ENCODE measurements at regions of chr20 and their contacts with region 1.

Region 1: DNA sequence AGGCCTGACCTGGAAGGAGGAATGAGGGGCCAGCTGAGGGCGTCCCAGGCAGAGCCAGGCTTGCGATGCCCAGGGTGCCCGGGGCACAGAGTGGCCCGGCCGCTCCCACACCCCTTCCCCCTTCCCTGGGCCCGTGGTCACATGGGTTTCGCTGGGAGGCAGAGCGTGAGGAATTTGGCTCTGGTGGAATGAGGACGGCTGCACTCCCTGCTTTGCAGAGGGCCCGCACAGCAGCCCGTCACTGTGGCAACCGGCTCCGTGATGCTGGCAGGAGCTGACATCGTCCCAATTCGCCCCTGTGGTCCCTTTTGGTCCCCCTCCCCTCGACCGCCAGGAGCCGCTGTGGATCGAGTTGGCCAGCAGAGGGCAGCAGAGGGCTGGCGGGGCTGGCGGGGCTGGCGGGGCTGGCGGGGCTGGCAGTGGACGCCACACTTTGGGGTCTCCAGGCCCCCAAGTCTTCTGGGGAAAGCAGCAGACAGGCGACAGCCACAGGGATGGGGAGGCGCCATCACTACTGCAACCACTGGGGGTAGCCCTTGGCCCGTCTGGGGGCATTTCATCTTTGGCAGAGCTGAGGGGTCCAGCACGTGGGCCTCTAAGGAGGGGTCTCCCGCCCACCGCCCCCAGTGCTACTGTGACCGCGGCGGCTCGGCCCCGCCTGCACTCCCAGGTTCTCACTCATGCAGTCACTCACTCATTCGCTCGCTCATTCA is 49.6 kb upstream of the BHLHE23 start:
- DNase-seq: peak; percentile 32 to 79 (median 75)
- ATAC-seq: peak; percentile 87
- H3K4me3 ChIP-seq: no peak overlapping the region
- H3K27ac ChIP-seq: no peak overlapping the region
- H3K4me1 ChIP-seq: peaks cover 0 to 35% of the 10 kb centered on the region in 2 experiments; a peak in 3 of 5 replicates
- H3K27me3 ChIP-seq: peaks cover 5 to 67% of the 10 kb centered on the region in 2 experiments
- CTCF ChIP-seq: peak; percentile 65 to 93 (median 79)
- EP300 ChIP-seq: no peak
- POLR2A ChIP-seq: no peak
- RAD21 ChIP-seq: peak; percentile 39 to 58

Region 2: GRCh38 chr20:62952373-62952967 is 103.9 kb before region 1 on chr20 and contains the start of gene SLC17A9:
- CTCF ChIA-PET with region 1: no interaction called
- POLR2A ChIA-PET with region 1: no interaction called
- in situ Hi-C with region 1: no loop called
- intact Hi-C with region 1: no loop called
- DNase-seq: peak in 1 of 4 experiments; percentile 32
- ATAC-seq: no peak
- H3K4me3 ChIP-seq: no peak within 1 kb of the TSS
- H3K27ac ChIP-seq: no peak within 1 kb of the TSS
- H3K4me1 ChIP-seq: peaks cover 3 to 35% of the 10 kb centered on the region in 2 experiments; a peak in 3 of 5 replicates
- H3K27me3 ChIP-seq: peaks cover 11 to 25% of the 10 kb centered on the region in 2 experiments; a peak in 4 of 5 replicates
- CTCF ChIP-seq: no peak
- EP300 ChIP-seq: no peak
- POLR2A ChIP-seq: no peak
- RAD21 ChIP-seq: no peak
- polyA plus RNA-seq, gene SLC17A9: not detected

Region 3: DNA sequence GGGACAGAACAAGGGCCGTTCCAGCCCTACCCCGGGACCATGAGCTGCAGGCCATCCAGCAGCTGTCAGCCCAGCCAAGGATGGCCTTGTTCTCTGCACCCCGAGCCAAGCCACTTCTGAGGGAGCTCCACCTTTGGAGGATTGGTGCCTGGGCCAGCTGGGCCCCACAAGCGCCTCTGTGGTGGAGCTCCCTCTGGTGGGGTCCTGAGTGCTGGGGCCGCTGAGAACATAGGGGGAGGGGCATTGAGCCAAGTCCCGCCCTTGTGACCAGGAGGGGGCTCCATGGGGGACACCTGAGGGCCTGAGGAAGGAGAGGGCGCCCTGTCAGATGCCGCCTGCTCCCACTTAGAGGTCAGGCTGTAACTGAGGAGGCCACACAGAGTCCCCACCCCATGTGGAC is 116.3 kb after region 1 on chr20:
- CTCF ChIA-PET with region 1: interaction called, 4 read pairs
- POLR2A ChIA-PET with region 1: no interaction called
- in situ Hi-C with region 1: no loop called
- intact Hi-C with region 1: loop called (anchors 5 kb)
- DNase-seq: peak; percentile 51 to 79 (median 73)
- ATAC-seq: peak; percentile 92
- H3K4me3 ChIP-seq: no peak overlapping the region
- H3K27ac ChIP-seq: no peak overlapping the region
- H3K4me1 ChIP-seq: peaks cover 0 to 39% of the 10 kb centered on the region in 2 experiments; a peak in 2 of 5 replicates
- H3K27me3 ChIP-seq: peaks cover 2 to 36% of the 10 kb centered on the region in 2 experiments; a peak in 3 of 5 replicates
- CTCF ChIP-seq: peak; percentile 62 to 80 (median 62)
- EP300 ChIP-seq: no peak
- POLR2A ChIP-seq: no peak
- RAD21 ChIP-seq: peak in 1 of 2 experiments; percentile 57; a peak in 2 of 4 replicates

Region 4: DNA sequence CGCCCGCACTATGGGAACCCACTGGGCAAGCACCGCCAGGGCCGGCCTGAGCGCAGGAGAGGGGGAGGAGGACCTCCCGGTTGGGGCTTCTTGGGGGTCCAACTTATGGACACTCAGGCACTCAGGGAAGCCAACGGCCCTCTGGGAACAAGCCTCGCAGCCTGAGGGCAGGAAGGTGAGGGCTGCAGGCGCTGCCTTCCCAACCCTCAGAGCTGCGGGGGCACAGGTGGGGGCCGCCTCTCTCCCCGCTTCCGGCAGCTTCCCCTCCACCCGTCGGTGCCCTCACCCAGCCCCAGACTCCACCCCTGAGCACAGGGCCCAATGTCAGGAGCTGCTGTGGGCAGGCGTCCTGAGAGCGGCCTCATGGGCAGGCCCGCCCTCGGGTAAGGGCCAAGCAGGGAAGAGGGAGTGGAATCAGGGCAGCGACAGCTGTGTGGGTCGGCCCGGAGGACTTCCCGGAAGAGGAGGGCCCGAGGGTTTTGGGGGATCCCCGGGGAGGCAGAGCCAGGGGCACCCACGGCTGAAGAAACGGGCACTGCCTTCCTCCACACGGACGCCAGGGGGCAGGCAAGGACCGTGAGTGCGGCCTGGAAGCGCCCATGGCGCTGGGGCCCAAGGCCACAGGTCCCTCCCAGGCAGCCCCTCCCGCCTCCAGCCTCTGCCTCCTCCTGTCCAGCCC is 481.3 kb after region 1 on chr20:
- CTCF ChIA-PET with region 1: no interaction called
- POLR2A ChIA-PET with region 1: no interaction called
- in situ Hi-C with region 1: no loop called
- intact Hi-C with region 1: no loop called
- DNase-seq: peak; percentile 90 to 94 (median 92)
- ATAC-seq: peak; percentile 95
- H3K4me3 ChIP-seq: no peak overlapping the region
- H3K27ac ChIP-seq: no peak overlapping the region
- H3K4me1 ChIP-seq: peaks cover 6 to 90% of the 10 kb centered on the region in 2 experiments; a peak in 4 of 5 replicates
- H3K27me3 ChIP-seq: peaks cover 0 to 26% of the 10 kb centered on the region in 2 experiments; a peak in 2 of 5 replicates
- CTCF ChIP-seq: peak; percentile 89 to 95 (median 92)
- EP300 ChIP-seq: no peak
- POLR2A ChIP-seq: no peak
- RAD21 ChIP-seq: peak; percentile 94 to 97